H1 (cell line): ENCODE measurements at regions of chr7 and their contacts with region 1.

Region 1: GRCh38 chr7:29636009-29636351 is 72.3 kb downstream of the PRR15 start:
- DNase-seq: no peak
- H3K4me3 ChIP-seq: no peak overlapping the region
- H3K27ac ChIP-seq: no peak overlapping the region
- H3K4me1 ChIP-seq: no peaks in the 10 kb centered on the region; a peak in 1 of 7 replicates
- H3K27me3 ChIP-seq: no peaks in the 10 kb centered on the region
- CTCF ChIP-seq: no peak
- EP300 ChIP-seq: no peak
- POLR2A ChIP-seq: no peak
- RAD21 ChIP-seq: no peak

Region 2: GRCh38 chr7:29622335-29623265 is 13.4 kb before region 1 on chr7:
- CTCF ChIA-PET with region 1: interaction called, 32 read pairs
- POLR2A ChIA-PET with region 1: no interaction called
- DNase-seq: no peak
- H3K4me3 ChIP-seq: no peak overlapping the region
- H3K27ac ChIP-seq: no peak overlapping the region
- H3K4me1 ChIP-seq: peaks cover 2 to 5% (median 4%) of the 10 kb centered on the region in 4 experiments; a peak in 4 of 7 replicates
- H3K27me3 ChIP-seq: no peaks in the 10 kb centered on the region
- CTCF ChIP-seq: no peak
- EP300 ChIP-seq: no peak
- POLR2A ChIP-seq: no peak
- RAD21 ChIP-seq: no peak

Region 3: GRCh38 chr7:29649028-29649716 is 13.2 kb after region 1 on chr7:
- CTCF ChIA-PET with region 1: interaction called, 10 read pairs
- POLR2A ChIA-PET with region 1: no interaction called
- DNase-seq: no peak
- H3K4me3 ChIP-seq: no peak overlapping the region
- H3K27ac ChIP-seq: no peak overlapping the region
- H3K4me1 ChIP-seq: no peaks in the 10 kb centered on the region
- H3K27me3 ChIP-seq: no peaks in the 10 kb centered on the region
- CTCF ChIP-seq: no peak
- EP300 ChIP-seq: no peak
- POLR2A ChIP-seq: no peak
- RAD21 ChIP-seq: no peak

Region 4: GRCh38 chr7:29748286-29749108 is 112.5 kb after region 1 on chr7:
- CTCF ChIA-PET with region 1: interaction called, 10 read pairs
- POLR2A ChIA-PET with region 1: no interaction called
- DNase-seq: no peak
- H3K4me3 ChIP-seq: no peak overlapping the region
- H3K27ac ChIP-seq: no peak overlapping the region
- H3K4me1 ChIP-seq: no peaks in the 10 kb centered on the region
- H3K27me3 ChIP-seq: no peaks in the 10 kb centered on the region
- CTCF ChIP-seq: peak in 2 of 3 experiments; percentile 40 to 51; a peak in 2 of 4 replicates
- EP300 ChIP-seq: no peak
- POLR2A ChIP-seq: no peak
- RAD21 ChIP-seq: peak; percentile 60 to 70